Activated B cell treated with CpG ODN at 0.5 μM for 24 hours (primary cell): ENCODE measurements at regions of chr1 and their contacts with region 1.

Region 1: GRCh38 chr1:205284343-205285144 is 37.0 kb downstream of the NUAK2 start:
- DNase-seq: peak; percentile 63
- ATAC-seq: peak; percentile 42
- H3K4me3 Mint-ChIP-seq: peak overlapping the region; percentile 67
- H3K27ac Mint-ChIP-seq: peak overlapping the region; percentile 98
- H3K4me1 Mint-ChIP-seq: peaks cover 90% of the 10 kb centered on the region
- H3K27me3 Mint-ChIP-seq: no peaks in the 10 kb centered on the region
- CTCF ChIP-seq: no peak

Region 2: GRCh38 chr1:204411451-204412204 is 872.9 kb before region 1 on chr1 and contains the start of gene PPP1R15B:
- CTCF ChIA-PET with region 1: no interaction called
- POLR2A ChIA-PET with region 1: no interaction called
- intact Hi-C with region 1: loop called (anchors 10 kb)
- DNase-seq: peak; percentile 96
- ATAC-seq: peak; percentile 89
- H3K4me3 Mint-ChIP-seq: peak within 1 kb of the TSS; percentile 99
- H3K27ac Mint-ChIP-seq: peak within 1 kb of the TSS; percentile 99
- H3K4me1 Mint-ChIP-seq: peaks cover 29% of the 10 kb centered on the region
- H3K27me3 Mint-ChIP-seq: no peaks in the 10 kb centered on the region
- CTCF ChIP-seq: no peak
- total RNA-seq, gene PPP1R15B: 60.4 and 70.6 TPM in 2 replicates

Region 3: DNA sequence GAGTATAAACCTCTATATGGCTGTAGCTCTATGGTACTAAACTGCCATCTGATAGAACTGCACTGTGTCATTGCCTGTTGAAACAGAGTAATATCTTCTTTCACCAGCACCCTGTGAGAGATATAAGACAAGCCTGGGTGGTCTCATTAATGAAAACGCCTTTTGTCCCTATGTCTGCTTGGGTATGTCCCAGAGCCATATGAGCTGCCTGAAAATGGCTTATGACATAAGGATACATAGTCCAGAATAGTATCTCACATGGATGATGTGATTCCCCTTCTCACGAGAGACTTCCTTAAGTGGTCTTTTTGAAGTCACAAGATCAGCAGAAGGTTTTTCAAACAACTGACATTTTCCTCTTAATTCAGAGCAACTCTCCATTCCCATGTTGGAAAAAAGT is 64.1 kb before region 1 on chr1:
- CTCF ChIA-PET with region 1: no interaction called
- POLR2A ChIA-PET with region 1: no interaction called
- intact Hi-C with region 1: no loop called
- DNase-seq: no peak
- ATAC-seq: no peak
- H3K4me3 Mint-ChIP-seq: no peak overlapping the region
- H3K27ac Mint-ChIP-seq: no peak overlapping the region
- H3K4me1 Mint-ChIP-seq: peaks cover 2% of the 10 kb centered on the region
- H3K27me3 Mint-ChIP-seq: peaks cover 6% of the 10 kb centered on the region
- CTCF ChIP-seq: no peak

Region 4: DNA sequence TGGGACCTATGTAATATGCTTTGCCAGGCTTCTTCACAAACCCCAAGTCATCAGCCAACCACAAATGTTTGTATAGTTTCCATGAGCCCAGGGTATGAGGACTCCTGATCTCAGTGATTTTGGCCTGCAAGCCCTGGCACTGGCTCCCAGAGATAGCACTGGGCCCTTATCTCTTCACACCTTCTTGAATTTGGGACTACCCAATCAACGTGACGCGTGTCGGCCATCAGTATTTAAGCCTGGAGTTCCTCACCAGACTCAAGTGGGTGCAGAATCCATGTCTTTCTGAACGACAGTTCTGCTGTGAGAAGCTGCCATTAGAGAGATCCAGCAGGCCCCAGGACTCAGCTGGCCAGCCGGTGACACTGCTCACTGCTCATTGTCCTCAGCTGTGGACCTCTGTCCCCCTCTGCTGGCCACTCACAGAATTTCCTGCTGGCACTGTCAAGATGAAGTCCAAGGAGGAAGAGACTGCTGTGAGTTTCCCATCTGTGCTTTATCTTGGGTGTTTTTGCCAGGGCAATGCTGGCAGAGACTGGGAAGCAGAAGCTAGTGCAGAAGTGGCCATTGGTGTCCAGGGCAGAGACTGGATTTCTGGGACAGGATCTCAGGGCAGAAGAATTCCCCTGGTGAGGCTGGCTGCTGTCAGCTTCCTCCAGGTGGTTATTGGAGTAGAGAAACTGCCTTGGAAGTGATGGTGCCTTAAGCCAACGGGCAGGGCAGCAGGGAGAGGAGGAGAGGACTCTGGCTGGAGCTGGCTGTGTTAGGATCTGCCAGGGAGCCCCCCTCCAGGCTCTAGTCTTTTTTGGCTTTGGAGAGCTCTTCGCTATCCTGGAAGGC is 28.4 kb before region 1 on chr1:
- CTCF ChIA-PET with region 1: no interaction called
- POLR2A ChIA-PET with region 1: no interaction called
- intact Hi-C with region 1: no loop called
- DNase-seq: peak; percentile 74
- ATAC-seq: peak; percentile 99
- H3K4me3 Mint-ChIP-seq: no peak overlapping the region
- H3K27ac Mint-ChIP-seq: no peak overlapping the region
- H3K4me1 Mint-ChIP-seq: no peaks in the 10 kb centered on the region
- H3K27me3 Mint-ChIP-seq: peaks cover 3% of the 10 kb centered on the region
- CTCF ChIP-seq: peak; percentile 98

Region 5: DNA sequence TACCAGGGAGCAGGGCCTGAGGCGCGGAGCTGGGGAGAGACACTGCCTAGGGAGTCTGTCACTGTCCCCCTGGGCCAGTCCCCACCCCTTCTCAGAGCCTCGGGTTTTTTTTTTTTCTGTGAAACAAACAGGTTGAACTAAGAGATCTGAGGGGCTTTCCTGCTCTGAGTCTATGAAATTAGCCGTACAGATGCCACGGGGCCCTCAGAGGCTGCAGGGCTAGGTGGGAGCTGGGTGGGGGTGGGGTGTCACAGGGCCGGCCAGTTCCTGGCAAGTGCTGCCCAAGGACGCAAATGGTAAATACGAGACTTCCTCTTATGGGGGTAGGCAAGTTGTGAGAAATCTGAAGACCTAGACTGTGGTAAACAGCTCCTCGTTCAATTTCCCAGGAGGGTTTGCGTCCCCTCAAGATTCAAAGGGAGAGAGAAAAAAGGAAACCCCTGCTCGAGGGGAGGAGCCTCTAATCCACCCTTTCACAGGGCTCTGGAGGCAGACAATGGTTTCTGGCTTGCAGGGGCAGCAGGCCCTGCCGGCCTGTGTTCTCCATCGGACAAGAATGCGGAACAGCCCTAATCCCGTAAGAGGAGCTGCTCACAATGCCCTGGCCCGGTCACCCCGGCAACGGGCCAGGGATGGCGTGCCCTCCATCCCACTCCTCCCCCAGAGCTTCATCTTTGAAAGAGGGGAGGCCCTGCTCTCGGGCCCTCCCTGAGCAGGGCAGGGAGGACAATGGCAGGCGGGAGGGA is 29.2 kb after region 1 on chr1:
- CTCF ChIA-PET with region 1: interaction called, 139 read pairs
- POLR2A ChIA-PET with region 1: interaction called, 1,622 read pairs
- intact Hi-C with region 1: loop called (anchors 1 kb)
- DNase-seq: peak; percentile 55
- ATAC-seq: peak; percentile 82
- H3K4me3 Mint-ChIP-seq: peak overlapping the region; percentile 85
- H3K27ac Mint-ChIP-seq: peak overlapping the region; percentile 98
- H3K4me1 Mint-ChIP-seq: peaks cover 95% of the 10 kb centered on the region
- H3K27me3 Mint-ChIP-seq: no peaks in the 10 kb centered on the region
- CTCF ChIP-seq: no peak

Region 6: GRCh38 chr1:205631727-205632373 is 347.3 kb after region 1 on chr1 and contains the start of gene ELK4:
- CTCF ChIA-PET with region 1: no interaction called
- POLR2A ChIA-PET with region 1: interaction called, 5 read pairs
- intact Hi-C with region 1: loop called (anchors 1 kb)
- DNase-seq: peak; percentile 99
- ATAC-seq: peak; percentile 83
- H3K4me3 Mint-ChIP-seq: peak within 1 kb of the TSS; percentile 96
- H3K27ac Mint-ChIP-seq: peak within 1 kb of the TSS; percentile 96
- H3K4me1 Mint-ChIP-seq: peaks cover 46% of the 10 kb centered on the region
- H3K27me3 Mint-ChIP-seq: no peaks in the 10 kb centered on the region
- CTCF ChIP-seq: no peak
- total RNA-seq, gene ELK4: 130 and 141 TPM in 2 replicates

Region 7: DNA sequence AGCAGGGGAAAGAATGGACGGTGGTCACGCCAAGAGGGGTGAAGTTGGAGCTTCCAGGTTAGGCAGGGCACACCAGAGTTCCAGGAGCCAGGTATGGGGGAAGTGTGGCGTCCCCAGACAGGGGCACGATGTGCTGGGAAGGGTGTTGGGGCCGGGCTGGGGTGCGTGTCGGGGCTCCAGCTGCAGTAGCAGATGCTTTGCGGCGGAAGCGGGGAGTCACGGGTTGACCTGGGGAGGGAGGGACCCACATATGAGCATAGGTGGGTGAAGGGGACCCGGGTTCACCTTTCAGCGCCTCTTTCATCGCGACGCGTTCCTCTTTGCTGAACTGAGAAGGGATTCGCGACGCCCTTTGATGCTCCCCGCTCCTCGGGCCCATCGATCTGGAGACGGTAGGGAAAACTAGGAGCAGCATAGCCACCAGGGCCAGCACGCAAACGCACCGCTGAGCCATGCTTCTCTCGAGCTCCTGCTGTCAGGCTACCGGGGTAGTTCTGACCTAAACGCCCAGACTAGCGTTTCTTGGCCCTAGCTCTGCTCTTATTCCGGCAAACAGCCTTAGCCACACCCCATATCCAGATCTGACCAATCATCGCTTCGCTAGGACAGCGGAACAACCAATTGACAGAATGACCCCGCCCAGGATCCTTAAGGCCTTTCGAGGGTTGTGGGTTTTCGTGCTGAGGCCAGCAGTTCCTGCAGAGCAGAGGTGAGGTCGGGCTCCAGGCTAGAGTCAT is 565.2 kb after region 1 on chr1 and contains the start of gene PM20D1:
- CTCF ChIA-PET with region 1: no interaction called
- POLR2A ChIA-PET with region 1: interaction called, 10 read pairs
- intact Hi-C with region 1: no loop called
- DNase-seq: peak; percentile 69
- ATAC-seq: peak; percentile 99
- H3K4me3 Mint-ChIP-seq: peak within 1 kb of the TSS; percentile 93
- H3K27ac Mint-ChIP-seq: peak within 1 kb of the TSS; percentile 91
- H3K4me1 Mint-ChIP-seq: peaks cover 14% of the 10 kb centered on the region
- H3K27me3 Mint-ChIP-seq: no peaks in the 10 kb centered on the region
- CTCF ChIP-seq: no peak
- total RNA-seq, gene PM20D1: 1.2 and 2.1 TPM in 2 replicates